SK-N-SH (cell line): ENCODE measurements at regions of chr2 and their contacts with region 1.

Region 1: GRCh38 chr2:233251306-233252116 is at the start of gene ATG16L1:
- DNase-seq: peak; percentile 99
- H3K4me3 ChIP-seq: peak within 1 kb of the TSS; percentile 87 to 98
- H3K27ac ChIP-seq: peak within 1 kb of the TSS; percentile 71 to 75
- H3K4me1 ChIP-seq: peaks cover 6 to 12% of the 10 kb centered on the region in 2 experiments
- H3K27me3 ChIP-seq: no peaks in the 10 kb centered on the region
- CTCF ChIP-seq: peak; percentile 94
- EP300 ChIP-seq: peak; percentile 12 to 28; a peak in 2 of 4 replicates
- RAD21 ChIP-seq: peak; percentile 98
- polyA plus RNA-seq, gene ATG16L1: 22.2 and 32.2 TPM in 2 replicates

Region 2: GRCh38 chr2:232827316-232827715 is 424.2 kb before region 1 on chr2:
- CTCF ChIA-PET with region 1: no interaction called
- POLR2A ChIA-PET with region 1: no interaction called
- DNase-seq: no peak
- H3K4me3 ChIP-seq: no peak overlapping the region
- H3K27ac ChIP-seq: no peak overlapping the region
- H3K4me1 ChIP-seq: no peaks in the 10 kb centered on the region
- H3K27me3 ChIP-seq: no peaks in the 10 kb centered on the region
- CTCF ChIP-seq: no peak
- EP300 ChIP-seq: no peak
- RAD21 ChIP-seq: no peak

Region 3: GRCh38 chr2:232854082-232854481 is 397.4 kb before region 1 on chr2:
- CTCF ChIA-PET with region 1: interaction called, 16 read pairs
- POLR2A ChIA-PET with region 1: no interaction called
- DNase-seq: no peak
- H3K4me3 ChIP-seq: no peak overlapping the region
- H3K27ac ChIP-seq: no peak overlapping the region; a peak in 1 of 4 replicates
- H3K4me1 ChIP-seq: peaks cover 0 to 9% of the 10 kb centered on the region in 2 experiments; a peak in 1 of 4 replicates
- H3K27me3 ChIP-seq: no peaks in the 10 kb centered on the region
- CTCF ChIP-seq: no peak
- EP300 ChIP-seq: no peak
- RAD21 ChIP-seq: no peak

Region 4: DNA sequence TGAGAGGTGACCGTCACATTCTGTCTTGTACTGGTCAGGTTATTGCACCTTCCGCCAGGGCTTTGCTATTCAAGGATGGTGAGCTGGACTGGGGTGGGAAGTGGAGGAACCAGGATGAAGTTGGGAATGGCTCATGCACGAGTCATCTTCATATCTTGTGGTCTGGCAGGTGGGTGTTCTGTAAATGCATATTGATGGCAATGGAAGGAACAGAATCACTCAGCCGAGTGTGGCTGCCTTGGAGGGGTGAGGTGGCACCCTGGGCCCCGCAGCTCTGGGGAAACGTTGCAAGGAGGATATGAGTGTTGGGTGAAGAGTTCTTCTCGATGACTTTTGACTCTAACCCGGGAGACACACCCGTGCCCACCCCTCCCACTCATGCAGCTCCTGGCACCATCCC is 217.8 kb before region 1 on chr2:
- CTCF ChIA-PET with region 1: interaction called, 13 read pairs
- POLR2A ChIA-PET with region 1: no interaction called
- DNase-seq: no peak
- H3K4me3 ChIP-seq: no peak overlapping the region
- H3K27ac ChIP-seq: no peak overlapping the region
- H3K4me1 ChIP-seq: no peaks in the 10 kb centered on the region
- H3K27me3 ChIP-seq: no peaks in the 10 kb centered on the region
- CTCF ChIP-seq: no peak
- EP300 ChIP-seq: no peak
- RAD21 ChIP-seq: no peak

Region 5: DNA sequence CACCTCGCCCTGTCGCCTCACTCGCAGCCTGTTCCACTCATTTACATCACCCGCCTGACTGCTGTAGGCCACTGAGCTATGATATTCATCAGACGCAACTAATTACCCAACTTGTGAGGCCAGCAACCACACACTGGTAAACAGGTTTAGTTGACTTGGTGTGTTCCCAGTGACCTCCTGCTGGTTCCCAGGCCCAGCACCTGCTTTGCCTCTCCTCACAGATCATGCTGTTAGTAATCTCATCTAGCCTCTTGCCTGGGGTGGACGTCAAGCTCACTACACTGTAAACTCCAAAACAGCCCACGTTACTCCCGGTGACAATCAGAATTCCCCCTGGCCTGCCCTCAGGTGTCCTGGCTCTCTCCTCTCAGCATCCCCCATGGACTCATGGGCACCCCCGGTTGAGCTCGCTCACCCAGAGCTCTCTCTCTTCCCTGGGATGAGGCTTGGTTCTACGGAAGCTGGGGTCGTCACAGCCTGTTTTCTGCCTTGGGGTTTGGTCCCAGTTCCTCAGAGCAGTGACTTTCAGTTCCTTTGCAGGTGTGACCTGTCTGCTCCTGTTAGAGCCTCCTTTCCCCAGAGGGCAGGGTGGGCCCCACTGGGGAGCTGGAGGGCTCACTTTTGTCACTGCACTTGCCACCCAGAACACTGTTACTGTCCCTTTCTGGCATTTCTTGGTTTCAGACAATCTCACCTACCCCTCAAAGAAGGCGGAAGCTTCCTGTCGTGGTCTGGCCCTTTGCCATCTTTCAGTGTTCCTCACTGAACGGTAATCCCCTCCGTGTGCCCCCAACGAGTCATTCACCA is 151.1 kb before region 1 on chr2:
- CTCF ChIA-PET with region 1: interaction called, 13 read pairs
- POLR2A ChIA-PET with region 1: no interaction called
- DNase-seq: no peak
- H3K4me3 ChIP-seq: no peak overlapping the region
- H3K27ac ChIP-seq: no peak overlapping the region
- H3K4me1 ChIP-seq: no peaks in the 10 kb centered on the region
- H3K27me3 ChIP-seq: no peaks in the 10 kb centered on the region
- CTCF ChIP-seq: no peak
- EP300 ChIP-seq: no peak
- RAD21 ChIP-seq: no peak

Region 6: GRCh38 chr2:233210843-233211547 is 40.5 kb before region 1 on chr2:
- CTCF ChIA-PET with region 1: no interaction called
- POLR2A ChIA-PET with region 1: no interaction called
- DNase-seq: no peak
- H3K4me3 ChIP-seq: no peak overlapping the region
- H3K27ac ChIP-seq: peak overlapping the region in 1 of 2 experiments; percentile 56; a peak in 1 of 4 replicates
- H3K4me1 ChIP-seq: peaks cover 4 to 30% of the 10 kb centered on the region in 2 experiments; a peak in 3 of 4 replicates
- H3K27me3 ChIP-seq: no peaks in the 10 kb centered on the region; the same call in 1 of the 2 replicates
- CTCF ChIP-seq: no peak
- EP300 ChIP-seq: peak in 1 of 2 experiments; percentile 58; a peak in 1 of 4 replicates
- RAD21 ChIP-seq: no peak

Region 7: DNA sequence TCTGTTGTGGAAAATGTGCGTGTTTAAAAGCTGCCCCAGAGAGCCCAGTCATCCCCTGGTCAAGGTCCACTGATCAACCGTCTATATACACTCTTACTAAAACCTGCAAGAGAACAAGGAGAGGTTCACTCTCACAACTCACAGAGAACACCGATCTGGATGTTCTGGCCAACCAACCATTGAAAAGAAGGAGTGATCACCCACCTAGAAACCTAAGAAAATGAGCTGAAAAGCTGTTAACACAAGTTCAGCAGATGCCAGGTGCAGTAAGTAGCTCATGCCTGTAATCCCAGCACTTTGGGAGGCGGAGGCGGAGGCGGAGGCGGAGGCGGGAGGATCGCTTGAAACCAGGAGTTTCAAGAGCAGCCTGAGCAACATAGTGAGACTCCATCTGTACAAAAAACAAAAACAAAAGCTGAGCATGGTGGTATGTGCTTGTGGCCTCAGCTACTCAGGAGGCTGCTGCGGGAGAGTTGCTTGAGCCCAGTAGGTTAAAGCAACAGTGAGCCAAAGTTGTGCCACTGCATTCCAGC is 14.5 kb after region 1 on chr2:
- CTCF ChIA-PET with region 1: interaction called, 19 read pairs
- POLR2A ChIA-PET with region 1: no interaction called
- DNase-seq: no peak
- H3K4me3 ChIP-seq: no peak overlapping the region
- H3K27ac ChIP-seq: no peak overlapping the region
- H3K4me1 ChIP-seq: no peaks in the 10 kb centered on the region
- H3K27me3 ChIP-seq: no peaks in the 10 kb centered on the region
- CTCF ChIP-seq: no peak
- EP300 ChIP-seq: no peak
- RAD21 ChIP-seq: no peak